MCF 10A (cell line): ENCODE measurements at regions of chr5 and their contacts with region 1.

Region 1: GRCh38 chr5:177390363-177391300 is 6.4 kb downstream of the SLC34A1 start:
- DNase-seq: peak; percentile 91
- H3K4me3 Mint-ChIP-seq: peak overlapping the region; percentile 49
- H3K27ac Mint-ChIP-seq: peak overlapping the region; percentile 76
- H3K4me1 Mint-ChIP-seq: peaks cover 33% of the 10 kb centered on the region
- H3K27me3 Mint-ChIP-seq: no peaks in the 10 kb centered on the region
- CTCF ChIP-seq: peak; percentile 99

Region 2: GRCh38 chr5:176934309-176934930 is 456.2 kb before region 1 on chr5:
- CTCF ChIA-PET with region 1: no interaction called
- POLR2A ChIA-PET with region 1: no interaction called
- intact Hi-C with region 1: no loop called
- DNase-seq: no peak
- H3K4me3 Mint-ChIP-seq: no peak overlapping the region
- H3K27ac Mint-ChIP-seq: no peak overlapping the region
- H3K4me1 Mint-ChIP-seq: no peaks in the 10 kb centered on the region
- H3K27me3 Mint-ChIP-seq: no peaks in the 10 kb centered on the region
- CTCF ChIP-seq: no peak

Region 3: DNA sequence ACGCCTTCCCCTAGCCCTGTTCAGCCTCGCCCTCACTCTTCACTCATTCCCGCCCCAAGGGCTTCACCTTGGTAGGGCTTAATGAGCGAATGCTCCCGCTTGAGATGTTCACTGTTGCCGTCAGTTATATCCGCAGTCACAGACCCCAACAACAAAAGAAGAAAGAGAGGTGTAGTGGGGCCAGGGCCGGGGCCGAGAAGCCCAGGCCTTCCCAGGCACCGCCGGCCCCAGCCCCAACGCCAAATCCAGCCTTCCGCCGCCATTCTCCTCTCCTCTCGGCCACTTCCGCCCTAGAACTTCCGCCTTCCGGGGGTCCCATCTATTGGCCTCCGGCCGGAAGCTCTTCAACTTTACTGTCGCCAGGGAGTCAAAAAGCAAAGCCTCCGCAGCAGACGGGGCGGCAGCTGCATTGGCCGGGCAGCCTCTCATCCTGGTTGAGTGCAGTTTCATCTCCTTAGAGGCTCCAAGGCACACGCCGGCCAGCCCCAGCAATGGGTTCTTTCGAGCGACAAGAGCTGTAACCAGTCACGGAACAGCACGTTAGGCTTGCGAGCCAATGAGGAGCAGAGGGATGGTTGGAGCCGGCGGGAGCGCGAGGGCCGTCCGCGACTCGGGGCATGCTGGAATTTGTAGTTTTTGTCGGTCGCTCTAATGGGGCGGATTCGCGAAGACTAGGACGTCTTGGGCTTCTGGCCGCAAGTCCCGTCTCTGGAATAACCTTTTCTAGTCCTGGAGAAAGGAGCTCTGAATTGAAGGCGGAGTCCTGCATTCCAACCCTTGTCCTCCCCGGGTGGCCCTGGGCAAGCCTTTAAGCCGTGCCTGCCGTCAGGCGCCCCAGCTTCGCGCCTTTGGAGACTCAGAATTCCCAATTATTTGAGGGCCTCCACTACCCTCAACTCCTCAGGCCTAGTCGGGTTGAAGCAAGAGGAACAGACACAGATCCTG is 39.0 kb before region 1 on chr5 and contains the start of gene LMAN2:
- CTCF ChIA-PET with region 1: interaction called, 44 read pairs
- POLR2A ChIA-PET with region 1: interaction called, 43 read pairs
- intact Hi-C with region 1: no loop called
- DNase-seq: peak; percentile 99
- H3K4me3 Mint-ChIP-seq: peak within 1 kb of the TSS; percentile 93
- H3K27ac Mint-ChIP-seq: peak within 1 kb of the TSS; percentile 98
- H3K4me1 Mint-ChIP-seq: peaks cover 24% of the 10 kb centered on the region
- H3K27me3 Mint-ChIP-seq: no peaks in the 10 kb centered on the region
- CTCF ChIP-seq: no peak
- total RNA-seq, gene LMAN2: 221 and 279 TPM in 2 replicates

Region 4: DNA sequence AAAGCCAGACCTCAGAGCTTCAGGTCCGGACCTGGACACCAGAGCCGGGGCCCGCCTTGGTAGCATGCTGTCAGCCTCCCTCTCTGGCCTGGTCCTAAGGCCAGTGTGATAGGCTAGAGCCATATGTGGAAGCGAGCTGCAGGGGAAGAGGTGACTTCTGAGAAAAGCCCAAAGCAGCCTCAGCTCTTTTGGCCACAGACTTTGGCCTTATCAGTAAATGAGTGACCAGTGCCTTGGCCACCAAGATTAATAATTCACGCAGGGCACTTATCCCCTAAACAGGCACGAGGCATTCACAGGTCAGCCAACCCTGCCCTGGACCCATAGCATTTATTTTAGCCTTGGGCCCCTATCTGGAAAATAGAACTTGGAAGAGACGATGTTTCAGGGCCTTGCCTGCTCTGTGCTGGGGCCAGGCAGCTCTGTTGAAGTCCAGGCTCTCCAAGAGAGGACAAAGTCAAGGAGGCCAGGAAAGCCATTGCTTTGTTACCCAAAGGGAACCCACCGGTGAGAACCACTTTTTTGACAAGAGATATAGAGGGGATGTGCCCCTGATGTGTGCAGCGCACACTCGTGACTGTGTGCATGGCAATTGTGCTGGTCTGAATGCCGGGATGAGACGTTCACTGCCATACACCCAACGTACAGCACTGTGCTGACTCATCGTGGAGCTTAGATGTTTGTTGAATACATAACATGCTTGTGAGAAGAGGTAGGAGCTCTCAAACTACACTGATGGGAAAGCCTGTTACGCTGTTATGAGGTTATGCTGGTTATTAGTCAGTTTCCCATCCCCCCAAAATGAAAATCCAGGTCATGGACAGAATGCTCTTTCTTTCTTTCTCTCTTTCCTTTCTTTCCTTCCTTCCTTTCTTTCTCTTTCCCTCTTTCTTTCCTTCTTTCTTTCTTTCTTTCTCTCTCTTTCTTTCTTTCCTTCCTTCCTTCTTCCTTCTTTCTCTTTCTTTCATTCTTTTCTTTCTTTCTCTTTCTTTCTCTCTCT is 11.4 kb before region 1 on chr5:
- CTCF ChIA-PET with region 1: interaction called, 107 read pairs
- POLR2A ChIA-PET with region 1: interaction called, 23 read pairs
- intact Hi-C with region 1: no loop called
- DNase-seq: peak; percentile 75
- H3K4me3 Mint-ChIP-seq: no peak overlapping the region
- H3K27ac Mint-ChIP-seq: no peak overlapping the region
- H3K4me1 Mint-ChIP-seq: peaks cover 15% of the 10 kb centered on the region
- H3K27me3 Mint-ChIP-seq: peaks cover 16% of the 10 kb centered on the region
- CTCF ChIP-seq: no peak

Region 5: GRCh38 chr5:177425801-177426565 is 35.4 kb after region 1 on chr5:
- CTCF ChIA-PET with region 1: interaction called, 35 read pairs
- POLR2A ChIA-PET with region 1: interaction called, 30 read pairs
- intact Hi-C with region 1: loop called (anchors 1 kb)
- DNase-seq: peak; percentile 100
- H3K4me3 Mint-ChIP-seq: peak overlapping the region; percentile 89
- H3K27ac Mint-ChIP-seq: peak overlapping the region; percentile 99
- H3K4me1 Mint-ChIP-seq: peaks cover 22% of the 10 kb centered on the region
- H3K27me3 Mint-ChIP-seq: no peaks in the 10 kb centered on the region
- CTCF ChIP-seq: no peak

Region 6: GRCh38 chr5:177446200-177447065 is 55.8 kb after region 1 on chr5 and contains the start of gene PRR7:
- CTCF ChIA-PET with region 1: interaction called, 209 read pairs
- POLR2A ChIA-PET with region 1: interaction called, 42 read pairs
- intact Hi-C with region 1: no loop called
- DNase-seq: peak; percentile 63
- H3K4me3 Mint-ChIP-seq: peak within 1 kb of the TSS; percentile 75
- H3K27ac Mint-ChIP-seq: peak within 1 kb of the TSS; percentile 70
- H3K4me1 Mint-ChIP-seq: peaks cover 21% of the 10 kb centered on the region
- H3K27me3 Mint-ChIP-seq: no peaks in the 10 kb centered on the region
- CTCF ChIP-seq: no peak
- total RNA-seq, gene PRR7: 15.0 and 23.2 TPM in 2 replicates

Region 7: DNA sequence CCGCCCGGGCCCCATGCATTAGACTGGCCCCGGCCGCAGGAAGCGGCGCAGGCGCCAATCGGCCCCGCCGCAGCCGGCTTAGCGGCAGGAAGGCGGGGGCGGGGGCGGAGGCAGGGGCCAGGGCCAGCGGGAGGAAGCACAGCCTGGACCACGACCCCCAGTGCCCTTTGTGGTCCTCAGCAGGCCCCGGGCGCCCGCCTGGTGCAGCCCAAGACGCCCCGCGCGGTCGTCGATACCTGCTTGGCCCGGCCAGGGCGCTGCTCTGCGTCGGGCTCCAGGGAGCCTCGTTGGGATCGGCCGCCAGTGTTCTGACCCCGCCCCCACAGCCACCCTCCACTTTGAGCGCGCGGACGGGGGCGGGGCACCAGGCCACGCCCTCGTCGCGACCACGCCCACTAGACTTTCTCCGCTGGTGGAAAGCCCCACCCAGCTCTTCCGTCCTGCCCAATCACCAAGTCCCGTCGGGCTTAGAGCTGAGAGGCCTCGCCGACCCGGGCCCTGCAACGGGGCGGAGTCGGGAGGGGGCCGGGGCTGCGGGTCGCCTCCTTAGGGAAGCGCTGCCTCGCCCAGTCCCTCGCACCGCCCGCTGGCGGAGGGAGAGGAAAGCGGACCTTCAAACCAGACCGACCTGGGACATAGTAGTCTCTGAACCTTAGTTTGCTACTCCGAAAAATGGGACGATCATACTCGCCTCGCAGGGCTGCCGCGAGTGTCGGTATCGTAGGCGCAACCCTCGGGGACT is 106.8 kb after region 1 on chr5 and contains the start of gene PDLIM7:
- CTCF ChIA-PET with region 1: interaction called, 83 read pairs
- POLR2A ChIA-PET with region 1: interaction called, 24 read pairs
- intact Hi-C with region 1: loop called (anchors 1 kb)
- DNase-seq: peak; percentile 99
- H3K4me3 Mint-ChIP-seq: peak within 1 kb of the TSS; percentile 74
- H3K27ac Mint-ChIP-seq: peak within 1 kb of the TSS; percentile 55
- H3K4me1 Mint-ChIP-seq: peaks cover 58% of the 10 kb centered on the region
- H3K27me3 Mint-ChIP-seq: no peaks in the 10 kb centered on the region
- CTCF ChIP-seq: no peak
- total RNA-seq, gene PDLIM7: 164 and 257 TPM in 2 replicates

Region 8: GRCh38 chr5:177546258-177546741 is 155.7 kb after region 1 on chr5:
- CTCF ChIA-PET with region 1: no interaction called
- POLR2A ChIA-PET with region 1: interaction called, 13 read pairs
- intact Hi-C with region 1: no loop called
- DNase-seq: peak; percentile 100
- H3K4me3 Mint-ChIP-seq: peak overlapping the region; percentile 59
- H3K27ac Mint-ChIP-seq: peak overlapping the region; percentile 97
- H3K4me1 Mint-ChIP-seq: peaks cover 51% of the 10 kb centered on the region
- H3K27me3 Mint-ChIP-seq: no peaks in the 10 kb centered on the region
- CTCF ChIP-seq: no peak